H1 (cell line): ENCODE measurements at regions of chr5 and their contacts with region 1.

Region 1: DNA sequence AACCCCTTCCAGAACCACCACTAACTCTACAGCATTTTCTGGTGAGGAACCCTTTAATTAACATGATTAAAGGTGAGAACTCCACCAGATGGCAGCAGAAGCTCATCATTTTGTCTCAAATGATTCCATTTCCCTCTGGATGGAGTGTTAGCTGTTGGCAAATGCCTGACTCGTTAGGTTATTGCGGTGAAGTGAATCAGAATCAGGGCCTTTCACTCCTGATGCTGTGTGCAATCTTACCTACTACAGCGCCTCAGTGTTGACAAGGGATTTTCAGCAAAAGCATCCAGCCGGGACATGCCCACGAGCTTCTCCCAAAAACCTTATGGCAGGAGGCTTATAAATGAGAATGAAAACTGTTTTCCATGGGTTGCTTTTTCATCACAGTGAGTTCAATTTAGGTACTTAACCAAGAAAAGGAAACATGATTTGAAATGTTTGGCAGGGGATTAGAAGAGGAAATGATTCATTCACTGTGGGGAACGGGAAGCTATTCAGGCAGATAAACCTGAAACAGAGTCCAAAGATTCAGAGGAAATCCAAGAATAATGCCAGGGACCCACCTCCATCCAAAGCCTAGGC is 48.0 kb upstream of the CAST start:
- DNase-seq: peak; percentile 38 to 54
- H3K4me3 ChIP-seq: no peak overlapping the region
- H3K27ac ChIP-seq: no peak overlapping the region
- H3K4me1 ChIP-seq: peaks cover 0 to 3% (median 0%) of the 10 kb centered on the region in 4 experiments; a peak in 1 of 7 replicates
- H3K27me3 ChIP-seq: no peaks in the 10 kb centered on the region
- CTCF ChIP-seq: peak in 2 of 3 experiments; percentile 56 to 71; a peak in 3 of 4 replicates
- EP300 ChIP-seq: no peak
- POLR2A ChIP-seq: no peak
- RAD21 ChIP-seq: peak; percentile 93 to 94

Region 2: GRCh38 chr5:96476654-96477053 is 137.5 kb before region 1 on chr5:
- CTCF ChIA-PET with region 1: no interaction called
- POLR2A ChIA-PET with region 1: no interaction called
- DNase-seq: no peak
- H3K4me3 ChIP-seq: no peak overlapping the region
- H3K27ac ChIP-seq: no peak overlapping the region
- H3K4me1 ChIP-seq: no peaks in the 10 kb centered on the region
- H3K27me3 ChIP-seq: no peaks in the 10 kb centered on the region
- CTCF ChIP-seq: no peak
- EP300 ChIP-seq: no peak
- POLR2A ChIP-seq: no peak
- RAD21 ChIP-seq: no peak

Region 3: GRCh38 chr5:96629774-96630173 is 15.6 kb after region 1 on chr5:
- CTCF ChIA-PET with region 1: interaction called, 10 read pairs
- POLR2A ChIA-PET with region 1: no interaction called
- DNase-seq: no peak
- H3K4me3 ChIP-seq: no peak overlapping the region
- H3K27ac ChIP-seq: no peak overlapping the region
- H3K4me1 ChIP-seq: no peaks in the 10 kb centered on the region; a peak in 1 of 7 replicates
- H3K27me3 ChIP-seq: no peaks in the 10 kb centered on the region
- CTCF ChIP-seq: no peak
- EP300 ChIP-seq: no peak
- POLR2A ChIP-seq: no peak
- RAD21 ChIP-seq: no peak

Region 4: GRCh38 chr5:96680759-96681470 is 66.7 kb after region 1 on chr5:
- CTCF ChIA-PET with region 1: interaction called, 89 read pairs
- POLR2A ChIA-PET with region 1: no interaction called
- DNase-seq: no peak
- H3K4me3 ChIP-seq: no peak overlapping the region
- H3K27ac ChIP-seq: no peak overlapping the region
- H3K4me1 ChIP-seq: no peaks in the 10 kb centered on the region
- H3K27me3 ChIP-seq: no peaks in the 10 kb centered on the region
- CTCF ChIP-seq: no peak
- EP300 ChIP-seq: no peak
- POLR2A ChIP-seq: no peak
- RAD21 ChIP-seq: no peak

Region 5: GRCh38 chr5:96729156-96729555 is 115.0 kb after region 1 on chr5:
- CTCF ChIA-PET with region 1: interaction called, 17 read pairs
- POLR2A ChIA-PET with region 1: no interaction called
- DNase-seq: no peak
- H3K4me3 ChIP-seq: no peak overlapping the region
- H3K27ac ChIP-seq: no peak overlapping the region
- H3K4me1 ChIP-seq: peaks cover 0 to 2% (median 1%) of the 10 kb centered on the region in 4 experiments; a peak in 2 of 7 replicates
- H3K27me3 ChIP-seq: no peaks in the 10 kb centered on the region
- CTCF ChIP-seq: peak in 1 of 3 experiments; percentile 8; a peak in 1 of 4 replicates
- EP300 ChIP-seq: no peak
- POLR2A ChIP-seq: no peak
- RAD21 ChIP-seq: peak in 1 of 2 experiments; percentile 30; a peak in 2 of 4 replicates